ENCODE measurements at regions of chr2 and their contacts with region 1.

Region 1: GRCh38 chr2:223760838-223761502 is 76.4 kb downstream of the AP1S3 start:
- DNase-seq: peak; percentile 55
- H3K4me3 Mint-ChIP-seq: no peak overlapping the region
- H3K27ac Mint-ChIP-seq: peak overlapping the region; percentile 40
- H3K4me1 Mint-ChIP-seq: peaks cover 24% of the 10 kb centered on the region
- H3K27me3 Mint-ChIP-seq: no peaks in the 10 kb centered on the region

Region 2: DNA sequence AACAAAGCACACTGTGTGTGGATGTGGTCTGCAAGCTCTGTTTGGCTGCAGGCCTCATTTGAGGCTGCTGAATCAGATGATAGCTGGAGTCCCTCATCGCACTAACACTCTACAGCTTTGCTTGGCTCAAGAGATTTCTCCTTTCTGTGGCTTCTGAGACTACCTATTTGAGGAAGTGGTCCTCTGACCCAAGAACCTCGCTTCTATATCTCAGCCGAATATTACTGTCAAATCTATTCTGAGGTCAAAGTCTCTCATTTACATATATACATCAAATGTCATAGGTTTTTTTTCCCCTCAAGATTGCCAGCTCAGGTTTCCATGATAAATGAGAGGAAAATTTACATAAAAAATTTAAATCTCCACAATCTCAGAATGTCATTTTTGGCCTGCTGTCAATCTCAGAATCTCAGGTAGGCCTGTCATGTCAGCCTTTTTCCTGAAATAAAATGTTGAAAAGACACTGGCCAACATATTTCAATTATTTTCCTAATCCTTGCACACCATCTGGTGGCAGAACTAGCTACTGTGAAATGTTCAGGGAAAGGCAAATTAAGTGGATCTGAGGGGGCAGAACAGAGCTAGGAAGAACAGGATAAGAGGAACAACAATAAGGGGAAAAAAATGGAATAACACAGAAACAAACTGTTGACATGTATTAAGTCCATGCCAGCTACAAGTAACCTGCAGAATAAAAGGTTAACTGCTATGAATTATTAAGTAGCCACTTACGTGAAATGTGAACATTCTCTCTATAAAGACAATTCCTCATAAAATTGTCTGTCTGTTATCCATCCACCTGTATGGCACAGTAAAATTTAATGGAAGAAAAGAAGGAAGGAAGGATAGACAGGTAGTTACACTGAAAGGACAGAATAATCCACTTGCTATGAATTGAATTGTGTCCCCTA is 37.1 kb after region 1 on chr2:
- intact Hi-C with region 1: loop called (anchors 5 kb)
- DNase-seq: no peak
- H3K4me3 Mint-ChIP-seq: no peak overlapping the region
- H3K27ac Mint-ChIP-seq: no peak overlapping the region
- H3K4me1 Mint-ChIP-seq: peaks cover 6% of the 10 kb centered on the region
- H3K27me3 Mint-ChIP-seq: no peaks in the 10 kb centered on the region